ENCODE measurements at regions of chr12 and their contacts with region 1.

Region 1: DNA sequence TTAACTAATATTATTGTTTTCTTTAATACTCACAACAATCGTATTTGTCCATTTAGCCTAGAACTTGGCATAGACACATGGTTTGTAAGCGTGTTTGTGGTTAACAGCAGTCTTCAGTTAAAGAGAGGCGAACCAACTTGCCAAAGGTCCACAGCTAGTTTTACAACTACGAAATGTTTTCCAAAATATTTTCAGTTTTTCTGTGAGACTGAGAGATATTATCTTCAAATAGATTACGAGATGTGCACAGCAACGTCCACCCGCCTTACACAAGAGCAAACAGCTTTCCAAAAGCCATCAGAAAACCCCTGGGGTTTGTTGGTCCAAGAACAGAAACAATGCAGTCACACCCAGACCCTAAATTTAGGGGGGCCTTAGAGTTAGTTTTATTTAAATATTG is 58.6 kb upstream of the RASSF3 start:
- DNase-seq: no peak
- ATAC-seq: no peak
- H3K4me3 Mint-ChIP-seq: no peak overlapping the region
- H3K27ac Mint-ChIP-seq: no peak overlapping the region
- H3K4me1 Mint-ChIP-seq: peaks cover 6% of the 10 kb centered on the region
- H3K27me3 Mint-ChIP-seq: no peaks in the 10 kb centered on the region

Region 2: GRCh38 chr12:64403707-64404469 is 147.8 kb before region 1 on chr12 and contains the start of gene XPOT:
- CTCF ChIA-PET with region 1: no interaction called
- POLR2A ChIA-PET with region 1: no interaction called
- intact Hi-C with region 1: no loop called
- DNase-seq: peak; percentile 97
- ATAC-seq: peak; percentile 90
- H3K4me3 Mint-ChIP-seq: peak within 1 kb of the TSS; percentile 97
- H3K27ac Mint-ChIP-seq: peak within 1 kb of the TSS; percentile 96
- H3K4me1 Mint-ChIP-seq: peaks cover 38% of the 10 kb centered on the region
- H3K27me3 Mint-ChIP-seq: no peaks in the 10 kb centered on the region
- total RNA-seq, gene XPOT: 179 to 187 TPM

Region 3: DNA sequence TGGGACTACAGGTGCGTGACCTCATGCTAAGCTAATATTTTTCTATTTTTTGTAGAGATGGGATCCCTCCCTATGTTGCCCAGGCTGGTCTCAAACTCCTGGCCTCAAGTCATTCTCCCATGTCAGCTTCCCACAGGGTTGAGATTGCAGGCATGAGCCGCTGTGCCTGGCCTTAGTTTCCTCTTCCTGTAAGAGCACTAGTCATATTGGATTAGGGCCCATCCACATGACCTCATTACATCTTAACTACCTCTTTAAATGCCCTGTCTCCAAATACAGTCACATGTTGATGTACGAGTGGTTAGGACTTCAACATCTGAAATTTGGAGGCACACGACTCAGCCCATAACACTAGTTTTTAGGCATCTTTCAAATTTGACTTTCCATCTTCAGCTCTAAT is 13.6 kb before region 1 on chr12:
- CTCF ChIA-PET with region 1: interaction called, 21 read pairs
- POLR2A ChIA-PET with region 1: no interaction called
- intact Hi-C with region 1: no loop called
- DNase-seq: no peak
- ATAC-seq: no peak
- H3K4me3 Mint-ChIP-seq: no peak overlapping the region
- H3K27ac Mint-ChIP-seq: no peak overlapping the region
- H3K4me1 Mint-ChIP-seq: no peaks in the 10 kb centered on the region
- H3K27me3 Mint-ChIP-seq: peaks cover 4% of the 10 kb centered on the region

Region 4: GRCh38 chr12:64571411-64571810 is 19.7 kb after region 1 on chr12:
- CTCF ChIA-PET with region 1: interaction called, 11 read pairs
- POLR2A ChIA-PET with region 1: no interaction called
- intact Hi-C with region 1: no loop called
- DNase-seq: no peak
- ATAC-seq: peak; percentile 44
- H3K4me3 Mint-ChIP-seq: no peak overlapping the region
- H3K27ac Mint-ChIP-seq: peak overlapping the region; percentile 30
- H3K4me1 Mint-ChIP-seq: peaks cover 28% of the 10 kb centered on the region
- H3K27me3 Mint-ChIP-seq: no peaks in the 10 kb centered on the region

Region 5: DNA sequence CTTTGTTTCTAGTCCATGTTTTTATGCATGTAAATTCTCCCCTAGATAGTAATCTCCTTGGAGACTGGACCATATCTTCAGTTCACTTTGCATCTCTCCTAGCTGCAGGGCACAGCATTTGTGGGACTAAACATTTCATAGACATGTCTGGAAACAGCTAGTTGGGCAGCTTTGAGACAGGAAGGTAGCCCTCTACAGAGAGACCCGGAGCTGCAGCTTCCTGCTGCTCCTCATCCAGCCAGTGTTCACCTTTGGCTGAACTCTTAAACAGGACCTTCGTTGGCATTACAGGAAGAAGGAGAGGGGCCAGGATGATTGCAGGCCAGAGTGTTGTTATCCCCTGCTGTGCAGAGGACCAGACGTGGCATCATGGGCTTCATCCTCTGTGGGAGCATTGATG is 154.6 kb after region 1 on chr12:
- CTCF ChIA-PET with region 1: interaction called, 39 read pairs
- POLR2A ChIA-PET with region 1: no interaction called
- intact Hi-C with region 1: no loop called
- DNase-seq: no peak
- ATAC-seq: no peak
- H3K4me3 Mint-ChIP-seq: no peak overlapping the region
- H3K27ac Mint-ChIP-seq: no peak overlapping the region
- H3K4me1 Mint-ChIP-seq: peaks cover 6% of the 10 kb centered on the region
- H3K27me3 Mint-ChIP-seq: no peaks in the 10 kb centered on the region